ENCODE measurements at regions of chr7 and their contacts with region 1.

Region 1: DNA sequence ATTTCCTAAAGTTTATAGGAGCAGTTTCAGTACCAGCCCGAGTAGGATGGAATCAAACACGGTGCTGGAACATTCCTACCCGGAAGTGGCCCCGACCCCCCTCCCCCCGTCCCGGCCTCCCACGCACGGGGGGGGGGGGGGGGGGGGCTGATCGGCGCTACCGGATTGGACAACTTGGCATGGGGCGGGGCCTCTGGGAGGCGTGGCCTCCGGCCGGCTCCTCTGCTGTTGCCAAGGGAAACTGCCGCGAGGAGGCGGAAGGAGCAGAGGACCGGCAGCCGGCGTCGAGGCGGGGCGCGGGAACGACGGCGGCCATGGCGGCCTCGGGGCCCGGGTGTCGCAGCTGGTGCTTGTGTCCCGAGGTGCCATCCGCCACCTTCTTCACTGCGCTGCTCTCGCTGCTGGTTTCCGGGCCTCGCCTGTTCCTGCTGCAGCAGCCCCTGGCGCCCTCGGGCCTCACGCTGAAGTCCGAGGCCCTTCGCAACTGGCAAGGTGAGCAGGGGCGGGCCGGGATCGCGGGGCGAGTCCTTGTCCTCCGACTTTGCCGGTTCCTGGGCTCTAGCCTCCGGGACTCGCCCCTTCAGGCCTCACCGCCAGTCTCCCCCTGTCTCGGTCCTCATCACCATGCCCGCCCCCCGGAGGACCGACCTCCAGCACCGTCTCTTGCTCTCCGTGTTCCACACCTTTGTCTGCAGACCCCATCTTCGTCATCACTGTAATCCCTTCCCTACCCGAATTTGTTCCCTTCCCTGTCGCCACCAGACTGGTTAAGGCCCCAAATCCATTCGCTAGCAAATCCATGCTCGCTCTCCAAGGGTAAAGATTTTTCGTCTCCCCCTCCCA is at the start of gene RHBDD2:
- DNase-seq: peak; percentile 90
- H3K4me3 Mint-ChIP-seq: peak within 1 kb of the TSS; percentile 95
- H3K27ac Mint-ChIP-seq: peak within 1 kb of the TSS; percentile 96
- H3K4me1 Mint-ChIP-seq: peaks cover 45% of the 10 kb centered on the region
- H3K27me3 Mint-ChIP-seq: no peaks in the 10 kb centered on the region
- total RNA-seq, gene RHBDD2: 59.9 and 63.9 TPM in 2 replicates

Region 2: DNA sequence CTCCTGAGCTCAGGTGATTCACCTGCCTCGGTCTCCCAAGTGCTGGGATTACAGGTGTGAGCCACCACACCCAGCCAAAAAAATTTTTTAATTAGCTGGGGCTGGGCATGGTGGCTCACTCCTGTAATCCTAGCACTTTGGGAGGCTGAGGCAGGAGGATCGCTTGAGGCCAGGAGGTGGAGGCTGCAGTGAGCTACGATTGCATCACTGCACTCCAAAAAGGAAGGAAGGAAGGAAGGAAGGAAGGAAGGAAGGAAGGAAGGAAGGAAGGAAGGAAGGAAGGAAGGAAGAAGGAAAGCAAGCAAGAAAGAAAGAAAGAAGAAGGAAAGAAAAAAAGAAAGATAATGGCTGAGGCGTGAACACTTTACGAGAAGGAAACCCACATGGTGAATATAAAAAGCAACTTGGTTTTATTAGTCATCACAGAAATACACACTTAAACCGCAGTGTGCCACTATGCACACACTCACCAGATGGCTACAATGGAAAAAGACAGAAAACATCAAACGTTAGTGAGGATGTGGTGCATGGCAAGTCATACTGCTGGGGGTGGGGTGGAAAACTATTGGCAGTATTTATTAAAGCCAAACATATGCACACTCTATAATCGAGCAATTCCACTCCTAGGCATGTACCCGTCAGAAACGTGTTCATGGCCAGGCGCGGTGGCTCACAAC is 102.6 kb before region 1 on chr7:
- intact Hi-C with region 1: loop called (anchors 1 kb)
- DNase-seq: peak; percentile 24
- H3K4me3 Mint-ChIP-seq: peak overlapping the region; percentile 26
- H3K27ac Mint-ChIP-seq: peak overlapping the region; percentile 83
- H3K4me1 Mint-ChIP-seq: peaks cover 31% of the 10 kb centered on the region
- H3K27me3 Mint-ChIP-seq: peaks cover 2% of the 10 kb centered on the region

Region 3: GRCh38 chr7:75914730-75915585 is 36.0 kb after region 1 on chr7 and contains the start of gene POR:
- intact Hi-C with region 1: loop called (anchors 1 kb)
- DNase-seq: peak; percentile 97
- H3K4me3 Mint-ChIP-seq: peak within 1 kb of the TSS; percentile 91
- H3K27ac Mint-ChIP-seq: peak within 1 kb of the TSS; percentile 86
- H3K4me1 Mint-ChIP-seq: peaks cover 35% of the 10 kb centered on the region
- H3K27me3 Mint-ChIP-seq: peaks cover 3% of the 10 kb centered on the region
- total RNA-seq, gene POR: 84.4 and 91.2 TPM in 2 replicates

Region 4: DNA sequence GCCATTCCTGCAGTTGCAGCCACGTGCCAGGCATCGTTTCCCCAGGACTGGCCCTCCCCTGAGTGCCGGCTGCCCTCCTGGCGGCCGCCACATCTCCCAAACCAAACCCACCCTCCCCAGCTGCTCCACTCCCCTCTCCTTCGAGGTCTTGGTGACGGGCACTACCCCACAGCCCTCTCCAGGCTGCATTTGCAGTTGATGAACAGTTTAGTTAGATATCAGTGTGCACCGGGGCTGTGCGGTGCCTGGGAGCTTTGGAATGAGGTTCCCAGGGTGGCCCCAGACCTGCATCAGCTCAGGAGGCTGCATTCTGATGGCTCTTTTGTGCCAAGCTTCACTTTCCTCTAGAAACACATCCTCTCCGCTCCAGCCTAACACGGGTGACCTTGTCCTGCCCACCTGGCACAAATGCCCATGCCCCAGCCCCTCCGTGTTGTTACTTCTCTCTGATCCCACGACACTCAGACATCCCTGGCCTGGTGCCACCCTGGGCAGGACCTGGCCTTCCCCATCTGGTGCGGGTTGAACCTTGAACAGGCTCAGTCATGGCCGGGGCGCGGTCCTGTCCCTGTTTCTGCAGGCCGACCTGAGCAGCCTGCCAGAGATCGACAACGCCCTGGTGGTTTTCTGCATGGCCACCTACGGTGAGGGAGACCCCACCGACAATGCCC is 100.9 kb after region 1 on chr7:
- intact Hi-C with region 1: no loop called
- DNase-seq: no peak
- H3K4me3 Mint-ChIP-seq: no peak overlapping the region
- H3K27ac Mint-ChIP-seq: no peak overlapping the region
- H3K4me1 Mint-ChIP-seq: no peaks in the 10 kb centered on the region
- H3K27me3 Mint-ChIP-seq: no peaks in the 10 kb centered on the region

Region 5: DNA sequence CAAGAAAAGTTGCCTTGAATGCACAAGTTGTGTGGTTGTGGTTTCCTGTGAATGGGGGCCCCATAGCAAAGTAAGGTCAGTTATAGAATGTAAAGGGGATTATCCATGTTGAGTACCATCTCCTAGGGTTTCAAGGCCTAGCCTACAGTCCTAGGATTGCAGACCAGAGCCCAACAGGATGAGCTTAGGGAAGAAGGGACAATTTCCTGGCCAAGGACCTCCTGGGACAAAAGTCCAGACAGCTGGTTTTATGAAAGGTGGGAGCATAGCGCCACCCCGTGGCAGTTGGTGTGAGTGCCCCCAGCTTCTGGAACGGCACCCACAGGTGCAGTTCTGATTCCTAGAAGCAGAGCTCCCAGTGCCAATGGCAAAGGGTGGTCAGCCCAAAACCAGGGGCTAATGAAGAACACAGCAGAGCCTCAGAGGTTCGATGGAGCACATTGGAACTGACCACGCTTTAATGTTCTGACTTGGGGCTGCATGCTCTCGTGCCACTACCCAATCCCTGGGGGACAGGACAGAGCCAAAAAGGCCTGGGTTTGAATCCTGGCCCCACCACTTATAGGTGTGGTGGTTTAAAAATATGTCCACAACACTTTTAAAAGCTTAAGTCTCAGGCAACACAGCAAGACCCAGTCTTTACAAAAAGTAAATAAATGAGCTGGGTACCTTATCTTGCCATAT is 141.2 kb after region 1 on chr7:
- intact Hi-C with region 1: loop called (anchors 1 kb)
- DNase-seq: peak; percentile 53
- H3K4me3 Mint-ChIP-seq: no peak overlapping the region
- H3K27ac Mint-ChIP-seq: peak overlapping the region; percentile 35
- H3K4me1 Mint-ChIP-seq: peaks cover 15% of the 10 kb centered on the region
- H3K27me3 Mint-ChIP-seq: no peaks in the 10 kb centered on the region

Region 6: GRCh38 chr7:76166404-76167255 is 287.6 kb after region 1 on chr7:
- intact Hi-C with region 1: loop called (anchors 1 kb)
- DNase-seq: peak; percentile 93
- H3K4me3 Mint-ChIP-seq: peak overlapping the region; percentile 85
- H3K27ac Mint-ChIP-seq: peak overlapping the region; percentile 85
- H3K4me1 Mint-ChIP-seq: peaks cover 10% of the 10 kb centered on the region
- H3K27me3 Mint-ChIP-seq: peaks cover 2% of the 10 kb centered on the region